Mammary epithelial cell (primary cell): ENCODE measurements at regions of chr10 and their contacts with region 1.

Region 1: GRCh38 chr10:6737758-6738505 is 157.9 kb upstream of the PRKCQ start:
- DNase-seq: peak; percentile 74
- H3K4me3 ChIP-seq: peak overlapping the region; percentile 64 to 80 (median 64)
- H3K27ac ChIP-seq: peak overlapping the region; percentile 91
- H3K4me1 ChIP-seq: peaks cover 38% of the 10 kb centered on the region
- H3K27me3 ChIP-seq: no peaks in the 10 kb centered on the region
- CTCF ChIP-seq: no peak

Region 2: DNA sequence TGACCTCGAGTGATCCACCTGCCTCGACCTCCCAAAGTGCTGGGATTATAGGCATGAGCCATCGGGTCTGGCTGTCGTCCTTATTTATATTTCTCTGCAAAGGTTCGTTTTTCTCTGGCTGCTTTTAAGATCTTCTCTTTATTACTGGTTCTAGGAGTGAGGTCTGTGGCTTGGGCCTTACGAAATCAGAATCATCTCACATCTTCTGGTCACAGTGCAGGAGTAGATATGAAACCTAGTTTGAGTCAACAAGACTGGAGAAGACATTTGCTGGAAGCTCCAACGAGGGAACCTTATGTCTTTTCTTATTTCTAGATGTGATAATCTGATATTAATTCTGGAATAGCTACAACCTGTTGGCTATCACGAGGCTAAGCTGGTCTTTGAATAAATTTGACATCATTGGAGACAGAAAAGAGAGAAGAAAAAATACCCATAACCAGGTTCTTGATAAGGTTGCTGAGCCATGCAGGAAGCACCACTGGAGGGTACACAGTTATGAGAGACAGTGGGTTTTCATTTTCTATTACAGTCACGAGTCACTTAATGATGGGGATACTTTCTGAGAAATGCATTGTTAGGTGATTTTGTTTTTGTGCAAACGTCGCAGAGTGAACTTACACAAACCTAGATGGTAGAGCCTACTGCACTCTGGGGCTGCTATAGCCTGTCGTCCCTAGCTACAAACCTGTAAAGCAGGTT is 735.0 kb before region 1 on chr10:
- CTCF ChIA-PET with region 1: interaction called, 12 read pairs
- dilution Hi-C with region 1: no loop called
- in situ Hi-C with region 1: no loop called
- intact Hi-C with region 1: no loop called
- DNase-seq: no peak
- H3K4me3 ChIP-seq: no peak overlapping the region
- H3K27ac ChIP-seq: no peak overlapping the region
- H3K4me1 ChIP-seq: no peaks in the 10 kb centered on the region
- H3K27me3 ChIP-seq: peaks cover 16% of the 10 kb centered on the region
- CTCF ChIP-seq: no peak